GM12878 (cell line): ENCODE measurements at regions of chr19 and their contacts with region 1.

Region 1: DNA sequence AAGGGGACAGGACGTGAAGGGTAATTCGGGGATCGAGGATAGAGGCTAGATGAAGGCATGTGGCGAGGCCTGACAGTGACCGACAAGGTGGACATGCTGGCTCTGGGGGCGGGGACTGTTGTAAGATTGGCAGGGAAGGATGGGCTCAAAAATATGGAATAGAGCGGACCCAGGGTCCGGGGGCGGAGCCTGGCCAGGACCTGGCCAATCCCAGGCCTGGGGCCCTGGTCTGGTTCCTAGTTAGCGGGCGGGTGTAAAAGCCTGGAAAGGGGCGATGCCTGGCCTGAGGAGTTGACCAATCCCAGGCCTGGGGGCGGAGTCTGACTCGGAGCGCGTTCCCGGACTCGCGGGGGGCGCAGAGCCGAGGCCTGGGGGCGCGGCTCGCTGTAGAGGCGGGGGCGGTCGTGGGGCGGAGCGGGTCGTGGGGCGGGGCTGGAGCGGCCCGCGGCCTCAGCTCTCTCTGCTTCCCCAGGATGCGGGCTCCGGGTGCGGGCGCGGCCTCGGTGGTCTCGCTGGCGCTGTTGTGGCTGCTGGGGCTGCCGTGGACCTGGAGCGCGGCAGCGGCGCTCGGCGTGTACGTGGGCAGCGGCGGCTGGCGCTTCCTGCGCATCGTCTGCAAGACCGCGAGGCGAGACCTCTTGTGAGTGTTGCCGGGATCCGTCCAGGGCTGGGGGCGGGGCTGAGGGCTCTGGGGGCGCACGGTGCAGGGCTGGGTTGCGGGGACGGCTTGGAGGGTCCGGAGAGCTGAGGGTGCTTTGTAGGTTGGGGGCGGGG is at the start of gene SLC27A1:
- DNase-seq: peak; percentile 86
- ATAC-seq: peak; percentile 94
- H3K4me3 ChIP-seq: peak within 1 kb of the TSS; percentile 80
- H3K27ac ChIP-seq: peak within 1 kb of the TSS; percentile 61
- H3K4me1 ChIP-seq: peaks cover 22% of the 10 kb centered on the region
- H3K27me3 ChIP-seq: no peaks in the 10 kb centered on the region
- CTCF ChIP-seq: no peak
- EP300 ChIP-seq: no peak
- POLR2A ChIP-seq: peak; percentile 73
- RAD21 ChIP-seq: no peak
- polyA plus RNA-seq, gene SLC27A1: 0.11 to 0.31 TPM

Region 2: GRCh38 chr19:17346109-17346671 is 124.1 kb before region 1 on chr19:
- CTCF ChIA-PET with region 1: interaction called, 6 read pairs
- POLR2A ChIA-PET with region 1: interaction called, 3 read pairs
- RAD21 ChIA-PET with region 1: no interaction called
- SMC1A ChIA-PET with region 1: interaction called, 3 read pairs
- in situ Hi-C with region 1: loop called (anchors 5 kb)
- intact Hi-C with region 1: loop called (anchors 1 kb)
- DNase-seq: peak; percentile 42
- ATAC-seq: peak; percentile 99
- H3K4me3 ChIP-seq: no peak overlapping the region
- H3K27ac ChIP-seq: no peak overlapping the region
- H3K4me1 ChIP-seq: peaks cover 19% of the 10 kb centered on the region
- H3K27me3 ChIP-seq: no peaks in the 10 kb centered on the region
- CTCF ChIP-seq: peak; percentile 93 to 96 (median 95); a peak in 5 of 6 replicates
- EP300 ChIP-seq: no peak
- POLR2A ChIP-seq: no peak
- RAD21 ChIP-seq: peak; percentile 79

Region 3: DNA sequence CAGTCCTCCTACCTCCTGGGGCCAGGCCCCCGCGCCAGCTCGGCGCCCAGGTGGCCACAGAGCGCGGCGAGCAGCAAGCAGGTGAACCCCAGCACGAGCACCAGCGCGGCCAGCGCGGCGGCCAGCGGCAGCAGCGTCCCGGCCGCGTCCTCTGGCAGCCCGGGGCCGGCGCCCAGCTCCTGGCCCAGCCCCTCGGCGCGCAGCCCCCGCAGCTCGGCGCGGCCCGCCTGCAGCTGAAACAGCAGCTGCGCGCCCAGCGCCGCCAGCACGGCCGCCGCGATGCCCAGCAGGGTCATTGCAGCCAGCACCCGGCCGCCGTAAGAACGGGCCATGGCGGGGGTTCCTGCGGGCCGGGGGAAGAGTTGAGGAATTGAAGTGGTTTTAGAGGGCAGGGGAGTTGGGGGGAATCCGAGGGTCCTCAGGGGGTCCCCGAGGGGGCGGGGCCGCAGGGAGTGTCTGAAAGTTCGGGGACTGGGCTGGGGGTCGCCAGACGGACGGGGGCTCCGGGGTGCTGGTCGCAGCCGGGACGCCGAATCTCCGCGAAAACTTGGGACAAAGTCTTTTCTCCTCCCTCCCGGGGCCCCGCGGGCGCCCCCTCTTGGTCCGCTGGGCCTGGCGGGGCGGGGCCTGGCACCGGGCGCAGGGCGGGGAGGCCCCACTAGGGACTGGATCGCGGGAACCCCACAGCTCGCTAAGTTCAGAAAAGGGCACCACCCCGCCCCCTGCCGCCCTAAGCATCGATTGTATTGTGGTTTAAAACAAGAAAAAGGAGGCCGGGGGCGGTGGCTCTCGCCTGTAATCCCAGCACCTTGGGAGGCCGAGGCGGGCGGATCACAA is 21.9 kb before region 1 on chr19 and contains the start of gene TMEM221:
- CTCF ChIA-PET with region 1: interaction called, 12 read pairs
- POLR2A ChIA-PET with region 1: no interaction called
- RAD21 ChIA-PET with region 1: interaction called, 4 read pairs
- SMC1A ChIA-PET with region 1: interaction called, 5 read pairs
- in situ Hi-C with region 1: no loop called
- intact Hi-C with region 1: no loop called
- DNase-seq: no peak
- ATAC-seq: peak; percentile 80
- H3K4me3 ChIP-seq: no peak within 1 kb of the TSS
- H3K27ac ChIP-seq: no peak within 1 kb of the TSS
- H3K4me1 ChIP-seq: peaks cover 11% of the 10 kb centered on the region
- H3K27me3 ChIP-seq: peaks cover 2 to 5% of the 10 kb centered on the region in 2 experiments; a peak in 3 of 4 replicates
- CTCF ChIP-seq: peak; percentile 28 to 40 (median 40); a peak in 4 of 6 replicates
- EP300 ChIP-seq: no peak
- POLR2A ChIP-seq: no peak
- RAD21 ChIP-seq: no peak
- polyA plus RNA-seq, gene TMEM221: 0.04 TPM in 1 of 2 experiments, not detected in the other

Region 4: GRCh38 chr19:17454576-17455071 is 15.6 kb before region 1 on chr19:
- CTCF ChIA-PET with region 1: interaction called, 12 read pairs
- POLR2A ChIA-PET with region 1: interaction called, 10 read pairs
- RAD21 ChIA-PET with region 1: interaction called, 3 read pairs
- SMC1A ChIA-PET with region 1: interaction called, 5 read pairs
- in situ Hi-C with region 1: no loop called
- intact Hi-C with region 1: no loop called
- DNase-seq: no peak
- ATAC-seq: no peak; the same call in 2 of the 3 replicates
- H3K4me3 ChIP-seq: no peak overlapping the region
- H3K27ac ChIP-seq: no peak overlapping the region
- H3K4me1 ChIP-seq: peaks cover 11% of the 10 kb centered on the region
- H3K27me3 ChIP-seq: peaks cover 3 to 7% of the 10 kb centered on the region in 2 experiments; a peak in 2 of 4 replicates
- CTCF ChIP-seq: no peak
- EP300 ChIP-seq: no peak
- POLR2A ChIP-seq: no peak
- RAD21 ChIP-seq: no peak

Region 5: DNA sequence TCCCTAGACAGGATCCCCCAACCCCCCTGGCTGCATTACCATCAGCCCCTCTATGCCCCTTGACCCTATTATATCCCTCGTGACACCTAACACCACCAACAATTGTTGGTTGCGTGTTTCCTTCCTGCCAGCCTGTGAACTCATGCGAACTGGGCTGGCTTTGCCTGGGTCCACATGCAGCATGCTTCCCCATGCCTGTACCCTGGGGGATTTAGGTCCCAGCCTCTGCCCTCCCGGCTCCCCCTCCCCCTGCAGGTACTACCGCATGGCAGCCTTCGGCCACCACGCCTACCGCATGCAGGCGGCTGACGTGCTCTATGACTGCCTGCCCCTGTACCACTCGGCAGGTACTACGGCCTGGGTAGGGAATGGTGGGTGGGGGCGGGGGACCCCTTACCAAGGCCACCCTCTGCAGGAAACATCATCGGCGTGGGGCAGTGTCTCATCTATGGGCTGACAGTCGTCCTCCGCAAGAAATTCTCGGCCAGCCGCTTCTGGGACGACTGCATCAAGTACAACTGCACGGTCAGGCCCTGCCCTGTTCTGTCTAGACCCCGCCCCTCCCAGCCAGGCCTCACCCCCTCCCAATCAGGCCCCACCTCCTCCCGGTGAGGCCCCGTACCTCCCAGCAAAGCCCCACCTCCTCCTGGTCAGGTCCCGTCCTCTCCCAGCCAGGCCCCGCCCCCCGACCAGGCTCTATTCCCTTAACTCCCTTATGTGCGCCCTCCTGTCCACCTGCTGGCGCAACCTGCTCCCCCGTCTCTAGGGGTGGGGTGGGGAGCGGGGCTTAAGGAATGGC is 18.5 kb after region 1 on chr19:
- CTCF ChIA-PET with region 1: no interaction called
- POLR2A ChIA-PET with region 1: no interaction called
- RAD21 ChIA-PET with region 1: no interaction called
- SMC1A ChIA-PET with region 1: no interaction called
- in situ Hi-C with region 1: no loop called
- intact Hi-C with region 1: no loop called
- DNase-seq: no peak
- ATAC-seq: peak; percentile 100
- H3K4me3 ChIP-seq: no peak overlapping the region
- H3K27ac ChIP-seq: no peak overlapping the region
- H3K4me1 ChIP-seq: peaks cover 6% of the 10 kb centered on the region
- H3K27me3 ChIP-seq: no peaks in the 10 kb centered on the region
- CTCF ChIP-seq: peak; percentile 20 to 47 (median 26); a peak in 4 of 6 replicates
- EP300 ChIP-seq: no peak
- POLR2A ChIP-seq: no peak
- RAD21 ChIP-seq: 0 out of 2 replicates have a peak, but pooled peaks have one; percentile 30